Lower lobe of right lung (tissue), 2 donors: ENCODE measurements at regions of chr22 and their contacts with region 1.

Region 1: DNA sequence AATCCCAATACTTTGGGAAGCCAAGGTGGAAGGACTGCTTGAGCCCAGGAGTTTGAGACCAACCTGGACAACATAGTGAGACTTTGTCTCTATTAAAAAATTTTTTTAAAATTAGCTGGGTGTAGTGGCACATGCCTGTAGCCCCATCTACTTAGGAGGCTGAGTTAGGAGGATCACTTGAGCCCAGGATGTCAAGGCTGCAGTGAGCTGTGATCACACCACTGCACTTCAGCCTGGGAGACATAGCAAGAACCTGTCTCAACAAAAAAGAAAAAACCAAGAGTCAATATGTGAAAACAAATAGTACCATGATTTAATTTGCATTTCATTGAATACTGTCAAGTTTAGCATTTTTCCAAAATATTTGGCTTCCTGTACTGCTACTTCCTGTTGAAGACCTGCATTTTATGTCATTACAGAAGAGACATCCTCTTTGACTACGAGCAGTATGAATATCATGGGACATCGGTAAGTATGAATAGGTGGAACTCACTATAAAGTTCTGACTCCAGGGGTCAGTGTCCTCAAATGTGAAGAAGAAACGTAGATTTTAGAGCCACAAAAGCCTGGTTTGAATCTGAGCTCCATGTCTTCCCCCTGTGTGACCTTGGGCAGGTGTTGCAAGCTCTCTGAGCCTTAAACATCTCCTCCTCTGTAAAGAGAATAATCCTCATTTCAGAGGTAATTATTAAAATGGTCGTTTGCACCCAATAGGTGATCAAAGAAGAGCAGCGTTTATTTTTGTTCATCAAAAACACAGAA is 16.0 kb downstream of the CDC45 start:
- DNase-seq: no peak
- ATAC-seq: no peak
- H3K4me3 ChIP-seq: no peak overlapping the region
- H3K27ac ChIP-seq: no peak overlapping the region
- H3K4me1 ChIP-seq: no peaks in the 10 kb centered on the region
- H3K27me3 ChIP-seq: no peaks in the 10 kb centered on the region
- CTCF ChIP-seq: peak; percentile 36

Region 2: DNA sequence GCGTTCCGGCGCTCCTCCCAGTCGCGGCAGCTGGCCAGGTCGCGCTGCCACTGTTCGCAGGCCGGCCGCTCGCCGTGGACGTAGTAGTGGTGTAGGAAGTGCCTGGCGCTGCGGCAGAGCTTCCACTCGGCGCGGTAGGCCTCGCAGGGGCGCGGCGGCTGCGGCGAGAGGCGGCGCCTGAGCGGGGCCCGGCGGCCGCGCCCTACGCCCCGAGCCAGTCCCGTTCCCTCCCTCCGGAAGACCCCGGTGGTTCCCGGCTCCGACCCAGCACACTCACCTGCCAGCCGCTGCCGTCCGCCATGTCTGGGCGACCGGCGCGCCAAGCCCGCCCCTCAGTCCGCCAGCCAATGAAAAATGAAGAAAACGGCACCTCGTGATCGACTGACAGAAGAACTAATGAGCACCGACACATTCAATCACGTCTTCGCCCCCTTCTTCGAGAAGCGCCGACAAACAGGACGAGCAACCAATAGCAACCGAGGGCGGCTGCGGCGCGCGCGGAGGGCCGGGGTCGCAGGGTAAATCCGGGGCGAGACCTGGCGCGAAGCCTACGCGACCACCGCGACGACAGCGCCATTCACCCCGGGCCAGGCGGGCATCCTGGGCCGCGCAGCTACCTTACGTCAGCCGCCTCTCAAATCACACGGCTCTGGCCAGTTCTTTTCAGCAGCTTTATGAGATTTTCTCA is 48.2 kb before region 1 on chr22 and contains the start of gene C22orf39:
- intact Hi-C with region 1: no loop called
- DNase-seq: peak; percentile 90
- ATAC-seq: peak; percentile 96 to 98
- H3K4me3 ChIP-seq: peak within 1 kb of the TSS; percentile 76
- H3K27ac ChIP-seq: peak within 1 kb of the TSS; percentile 89
- H3K4me1 ChIP-seq: peaks cover 33% of the 10 kb centered on the region
- H3K27me3 ChIP-seq: no peaks in the 10 kb centered on the region
- CTCF ChIP-seq: no peak
- total RNA-seq, gene C22orf39: 36.4 TPM

Region 3: DNA sequence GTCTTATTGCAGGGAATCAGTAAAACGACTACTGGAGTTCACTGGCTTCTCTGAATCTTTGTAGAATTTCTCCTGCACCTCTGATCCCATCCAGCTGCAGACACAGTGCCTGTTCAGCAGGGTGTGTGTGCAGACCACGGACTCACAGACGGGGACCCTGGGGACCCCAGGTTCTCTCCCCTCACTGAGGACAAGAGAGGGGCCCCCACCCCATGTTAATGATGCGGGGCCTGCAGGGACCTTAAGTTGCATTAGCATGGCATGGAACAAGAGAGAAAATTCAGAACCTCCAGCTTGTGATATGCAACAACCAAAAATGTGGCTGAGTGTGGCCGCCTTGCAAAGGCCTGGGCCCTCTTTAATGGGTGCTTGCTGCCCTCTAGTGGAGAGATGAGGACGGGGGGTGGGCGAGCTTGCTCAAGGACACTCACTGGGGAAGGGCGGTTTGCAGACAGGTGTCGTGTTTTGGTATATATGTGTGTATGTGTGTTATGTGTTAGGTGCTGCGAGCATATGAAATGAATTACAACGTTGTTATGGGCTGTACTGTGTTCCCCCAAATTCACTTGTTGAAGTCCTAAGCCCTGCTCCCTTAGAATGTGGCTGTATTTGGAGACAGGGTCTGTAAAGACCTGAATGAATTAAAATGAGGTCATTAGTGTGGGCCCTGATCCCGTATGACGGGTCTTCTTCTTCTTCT is 134.1 kb after region 1 on chr22:
- intact Hi-C with region 1: loop called (anchors 10 kb)
- DNase-seq: peak; percentile 81
- ATAC-seq: peak; percentile 86 to 93
- H3K4me3 ChIP-seq: no peak overlapping the region
- H3K27ac ChIP-seq: no peak overlapping the region
- H3K4me1 ChIP-seq: peaks cover 12% of the 10 kb centered on the region
- H3K27me3 ChIP-seq: no peaks in the 10 kb centered on the region
- CTCF ChIP-seq: peak; percentile 95